ENCODE measurements at regions of chr2 and their contacts with region 1.

Region 1: DNA sequence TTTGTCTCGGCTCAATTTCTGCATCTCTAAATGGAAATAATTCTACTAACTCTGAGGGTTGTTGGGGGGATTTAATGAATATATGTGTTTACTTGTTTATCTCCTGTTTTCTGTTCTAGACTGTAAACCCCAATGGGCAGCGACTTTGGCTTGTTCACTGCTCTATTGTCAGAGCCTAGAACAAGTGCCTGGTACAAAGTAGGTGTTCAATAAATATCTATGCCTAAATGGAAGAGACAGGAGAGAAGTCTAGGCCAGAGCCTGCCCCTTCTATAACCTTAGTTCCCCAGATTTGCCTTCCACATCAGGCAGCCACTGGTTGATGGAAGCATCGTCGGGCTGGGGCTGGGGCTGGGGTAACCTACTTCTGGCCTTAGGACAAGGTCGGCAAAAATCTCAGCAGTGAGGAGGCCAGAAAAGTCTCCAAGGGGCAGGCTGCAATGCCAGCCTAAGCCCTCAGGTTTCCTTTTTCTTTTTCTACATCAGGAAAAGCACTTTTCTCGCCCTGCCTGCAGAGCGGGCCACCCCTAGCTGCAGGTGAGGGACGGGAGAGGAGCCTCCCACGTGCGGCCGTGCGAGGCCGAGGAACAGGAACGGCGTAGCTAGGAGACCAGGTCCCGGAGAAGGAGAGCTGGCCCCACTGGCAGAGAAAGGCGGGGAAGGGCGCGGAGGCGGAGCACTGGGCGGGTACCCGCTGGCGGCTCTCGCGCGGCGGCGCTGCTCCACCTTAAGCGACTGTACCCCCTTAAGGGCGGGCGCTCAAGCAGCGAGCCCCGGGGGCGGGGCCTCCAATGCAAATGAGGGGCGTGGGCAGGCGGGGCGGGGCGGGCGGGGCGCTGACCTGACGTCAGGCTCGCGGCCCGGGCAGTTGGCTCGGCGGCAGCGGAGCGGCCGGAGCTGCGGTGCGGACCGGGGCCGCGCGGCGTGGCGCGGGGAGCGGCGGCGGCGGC is at the start of gene CNNM4:
- DNase-seq: peak; percentile 74
- H3K4me3 ChIP-seq: peak within 1 kb of the TSS; percentile 45 to 83 (median 71)
- H3K27ac ChIP-seq: peak within 1 kb of the TSS; percentile 84 to 92 (median 90)
- H3K4me1 ChIP-seq: peaks cover 31 to 78% (median 50%) of the 10 kb centered on the region in 3 donors
- H3K27me3 ChIP-seq: no peaks in the 10 kb centered on the region
- CTCF ChIP-seq: peak in 5 of 6 experiments; percentile 11 to 39 (median 31)
- POLR2A ChIP-seq: peak in 2 of 4 donors; percentile 27 to 29
- total RNA-seq, gene CNNM4: 3.4 to 8.5 (median 6.7) TPM

Region 2: DNA sequence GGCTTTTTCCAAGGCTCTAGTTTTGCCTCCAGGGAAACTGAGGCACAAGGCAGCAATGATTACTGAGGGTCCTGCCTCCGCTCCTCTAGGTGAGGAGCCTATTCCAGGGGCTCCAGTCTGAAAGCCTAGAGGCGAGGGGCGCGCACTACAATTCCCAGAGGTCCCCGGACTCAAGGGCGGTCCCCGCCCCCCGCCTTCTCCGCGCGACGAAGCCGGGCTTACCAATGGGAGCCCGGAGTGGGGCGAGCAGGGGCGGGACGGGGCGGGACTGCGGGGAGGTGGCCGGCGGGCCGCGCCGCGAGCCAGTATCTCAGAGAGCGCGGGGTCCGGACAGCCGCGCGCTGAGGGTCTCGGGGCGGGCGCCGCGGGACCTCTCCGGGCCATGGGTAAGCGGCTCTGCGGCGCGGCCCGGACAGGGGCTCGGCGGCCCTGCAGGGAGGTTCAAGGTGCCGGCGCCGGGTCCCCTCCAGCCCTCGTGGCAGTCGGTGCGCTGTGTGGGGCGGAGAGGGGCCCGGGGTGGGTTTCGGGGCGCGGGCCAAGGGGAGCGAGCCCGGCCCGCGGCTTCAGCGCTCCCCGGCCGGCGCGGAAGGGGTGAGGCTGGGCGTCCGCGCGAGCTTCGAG is 223.8 kb before region 1 on chr2 and contains the start of gene ARID5A:
- intact Hi-C with region 1: loop called (anchors 10 kb)
- DNase-seq: peak; percentile 83
- H3K4me3 ChIP-seq: peak within 1 kb of the TSS; percentile 66 to 96 (median 88)
- H3K27ac ChIP-seq: peak within 1 kb of the TSS; percentile 93 to 99 (median 96)
- H3K4me1 ChIP-seq: peaks cover 46 to 98% (median 77%) of the 10 kb centered on the region in 3 donors
- H3K27me3 ChIP-seq: peaks cover 0 to 70% (median 0%) of the 10 kb centered on the region in 4 donors
- CTCF ChIP-seq: peak in 5 of 6 experiments; percentile 33 to 58 (median 46)
- POLR2A ChIP-seq: peak in 3 of 4 donors; percentile 92 to 99 (median 98)
- total RNA-seq, gene ARID5A: 2.8 to 25.9 (median 5.7) TPM

Region 3: GRCh38 chr2:96638144-96639121 is 121.9 kb before region 1 on chr2 and contains the start of gene KANSL3:
- intact Hi-C with region 1: loop called (anchors 10 kb)
- DNase-seq: peak; percentile 52
- H3K4me3 ChIP-seq: peak within 1 kb of the TSS; percentile 70 to 78 (median 72)
- H3K27ac ChIP-seq: peak within 1 kb of the TSS; percentile 94 to 100 (median 98)
- H3K4me1 ChIP-seq: peaks cover 14 to 56% (median 15%) of the 10 kb centered on the region in 3 donors
- H3K27me3 ChIP-seq: no peaks in the 10 kb centered on the region
- CTCF ChIP-seq: peak in 3 of 6 experiments; percentile 12 to 48 (median 44)
- POLR2A ChIP-seq: peak in 3 of 4 donors; percentile 47 to 98 (median 87)
- total RNA-seq, gene KANSL3: 16.0 to 45.2 (median 18.1) TPM

Region 4: DNA sequence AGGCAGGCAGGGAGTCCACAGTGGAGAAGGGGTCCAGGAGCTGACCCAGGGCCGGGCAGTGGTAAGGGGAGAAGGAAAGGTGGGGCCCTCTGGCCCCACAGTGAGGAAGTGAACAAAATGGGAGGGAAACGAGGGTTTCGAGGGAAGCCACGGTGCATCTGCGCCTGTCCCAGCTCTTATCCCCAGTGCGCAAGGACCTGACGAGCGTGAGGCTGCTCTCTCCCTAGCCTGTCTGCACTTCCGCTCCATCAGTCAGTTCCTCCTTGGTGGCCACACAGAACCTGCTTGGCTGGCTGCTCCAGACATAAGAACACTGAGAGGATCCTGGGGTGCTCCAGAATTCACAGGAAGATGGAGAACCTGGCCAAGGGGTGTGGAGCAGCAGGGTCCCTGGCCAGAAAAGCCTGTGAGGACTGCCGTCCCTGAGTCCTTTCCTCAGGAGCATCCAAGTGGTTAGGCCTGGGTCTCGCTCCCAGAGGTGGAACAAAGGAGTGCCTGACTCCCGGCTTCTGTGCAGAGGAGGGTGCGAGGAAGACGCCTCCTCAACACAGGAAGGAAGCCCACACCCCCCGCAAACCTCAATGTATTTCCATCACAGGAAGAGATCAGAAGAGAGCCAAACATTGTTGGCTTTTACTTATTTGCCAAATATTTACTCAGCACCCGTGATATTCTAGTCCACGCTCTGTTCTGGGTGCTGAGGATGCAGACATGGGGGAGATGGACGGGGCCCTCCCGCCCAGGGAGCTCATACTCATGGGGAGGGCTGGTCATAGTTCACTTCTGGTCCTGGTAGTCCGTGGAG is 153.3 kb after region 1 on chr2:
- intact Hi-C with region 1: no loop called
- DNase-seq: no peak
- H3K4me3 ChIP-seq: peak overlapping the region in 1 of 4 donors; percentile 12
- H3K27ac ChIP-seq: peak overlapping the region in 1 of 4 donors; percentile 13
- H3K4me1 ChIP-seq: peaks cover 13 to 45% (median 24%) of the 10 kb centered on the region in 3 donors
- H3K27me3 ChIP-seq: no peaks in the 10 kb centered on the region
- CTCF ChIP-seq: no peak
- POLR2A ChIP-seq: peak in 1 of 4 donors; percentile 12

Measured in esophagus squamous epithelium (tissue), 5 donors.